Activated B cell treated with CpG ODN at 0.5 μM for 24 hours (primary cell): ENCODE measurements at regions of chr11 and their contacts with region 1.

Region 1: GRCh38 chr11:26087120-26087935 is 244.6 kb upstream of the ANO3 start:
- DNase-seq: no peak
- ATAC-seq: peak; percentile 95
- H3K4me3 Mint-ChIP-seq: peak overlapping the region; percentile 65
- H3K27ac Mint-ChIP-seq: peak overlapping the region; percentile 86
- H3K4me1 Mint-ChIP-seq: peaks cover 54% of the 10 kb centered on the region
- H3K27me3 Mint-ChIP-seq: no peaks in the 10 kb centered on the region
- CTCF ChIP-seq: no peak

Region 2: DNA sequence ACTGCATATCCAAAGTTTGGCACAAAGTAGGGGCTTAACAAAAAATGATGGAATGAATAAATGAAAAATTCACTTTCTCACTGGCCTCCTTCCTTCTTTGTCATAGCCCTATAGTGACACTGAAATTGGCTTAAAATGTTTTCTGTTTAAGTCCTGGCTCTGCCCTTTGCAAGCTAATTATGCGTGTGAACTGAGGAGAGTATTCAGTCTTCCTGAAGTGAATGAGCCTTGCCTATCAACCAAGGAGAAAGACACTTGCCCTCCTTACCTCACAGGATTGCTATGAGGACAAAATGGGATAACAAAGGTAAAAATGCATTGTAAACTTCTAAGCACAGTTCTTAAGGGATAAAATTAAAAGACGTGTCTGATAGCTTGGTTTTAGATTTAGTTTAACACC is 485.2 kb before region 1 on chr11:
- CTCF ChIA-PET with region 1: no interaction called
- POLR2A ChIA-PET with region 1: no interaction called
- intact Hi-C with region 1: no loop called
- DNase-seq: no peak
- ATAC-seq: no peak
- H3K4me3 Mint-ChIP-seq: no peak overlapping the region
- H3K27ac Mint-ChIP-seq: no peak overlapping the region
- H3K4me1 Mint-ChIP-seq: no peaks in the 10 kb centered on the region
- H3K27me3 Mint-ChIP-seq: no peaks in the 10 kb centered on the region
- CTCF ChIP-seq: no peak

Region 3: DNA sequence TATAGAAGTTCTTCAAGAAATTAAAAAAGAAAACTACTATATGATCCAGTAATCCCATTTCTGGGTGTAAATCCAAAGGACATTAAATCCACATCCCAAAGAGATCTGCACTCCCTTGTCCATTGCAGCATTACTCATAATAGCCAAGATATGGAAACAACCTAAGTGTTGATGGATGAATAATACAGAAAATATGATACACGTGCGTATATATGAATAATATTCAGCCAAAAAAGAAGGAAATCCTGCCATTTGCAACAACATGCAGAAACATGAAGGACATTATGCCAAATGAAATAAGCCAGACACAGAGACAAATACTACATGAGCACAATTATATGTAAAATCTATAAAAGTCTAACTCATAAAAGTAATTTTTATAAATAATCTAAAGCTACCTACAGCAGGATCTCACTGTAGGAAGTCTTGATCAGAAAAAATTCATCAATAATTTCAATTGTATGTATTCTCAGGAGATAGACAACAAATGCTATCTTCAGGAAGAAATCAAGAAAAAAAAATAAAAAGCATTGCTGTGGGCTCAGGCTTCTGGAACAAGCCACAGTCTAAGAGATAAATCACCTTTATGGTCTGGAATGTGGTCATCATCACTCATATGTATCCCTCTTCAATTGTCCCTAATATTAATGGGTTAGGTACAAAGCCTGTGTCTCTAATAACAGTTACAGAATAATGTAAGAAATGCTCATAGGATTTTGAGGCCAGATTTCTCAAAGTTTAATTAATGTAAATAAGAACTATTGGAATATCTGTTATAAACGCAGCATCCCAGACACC is 61.4 kb before region 1 on chr11:
- CTCF ChIA-PET with region 1: no interaction called
- POLR2A ChIA-PET with region 1: no interaction called
- intact Hi-C with region 1: no loop called
- DNase-seq: no peak
- ATAC-seq: no peak
- H3K4me3 Mint-ChIP-seq: no peak overlapping the region
- H3K27ac Mint-ChIP-seq: no peak overlapping the region
- H3K4me1 Mint-ChIP-seq: no peaks in the 10 kb centered on the region
- H3K27me3 Mint-ChIP-seq: no peaks in the 10 kb centered on the region
- CTCF ChIP-seq: no peak

Region 4: GRCh38 chr11:26043665-26044064 is 43.7 kb before region 1 on chr11:
- CTCF ChIA-PET with region 1: no interaction called
- POLR2A ChIA-PET with region 1: no interaction called
- intact Hi-C with region 1: loop called (anchors 1 kb)
- DNase-seq: no peak
- ATAC-seq: peak; percentile 65
- H3K4me3 Mint-ChIP-seq: no peak overlapping the region
- H3K27ac Mint-ChIP-seq: no peak overlapping the region
- H3K4me1 Mint-ChIP-seq: peaks cover 14% of the 10 kb centered on the region
- H3K27me3 Mint-ChIP-seq: no peaks in the 10 kb centered on the region
- CTCF ChIP-seq: no peak

Region 5: DNA sequence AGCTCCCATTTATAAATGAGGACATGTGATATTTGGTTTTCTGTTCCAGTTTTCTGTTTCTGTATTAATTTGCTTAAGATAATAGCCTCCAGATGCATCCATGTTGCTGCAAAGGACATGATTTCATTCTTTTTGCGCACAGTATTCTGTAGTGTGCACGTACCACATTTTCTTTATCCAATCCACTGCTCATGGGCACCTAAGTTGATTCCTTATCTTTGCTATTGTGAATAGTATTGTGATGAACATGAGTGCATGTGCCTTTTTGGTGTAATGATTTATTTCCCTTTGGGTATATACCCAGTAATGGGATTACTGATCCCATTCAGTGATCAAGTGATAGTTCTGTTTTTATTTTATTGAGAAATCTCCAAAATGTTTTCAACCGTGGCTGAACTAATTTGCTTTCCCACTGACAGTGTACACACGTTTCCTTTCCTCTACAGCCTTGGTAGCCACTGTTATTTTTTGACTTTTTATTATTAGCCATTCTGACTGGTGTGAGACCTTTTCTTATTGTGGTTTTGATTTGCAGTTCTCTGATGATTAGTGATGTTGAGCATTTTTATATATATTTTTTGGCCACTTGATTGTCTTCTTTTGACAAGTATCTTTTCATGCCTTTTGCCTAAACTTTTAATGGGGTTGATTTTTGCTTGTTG is 18.6 kb after region 1 on chr11:
- CTCF ChIA-PET with region 1: no interaction called
- POLR2A ChIA-PET with region 1: no interaction called
- intact Hi-C with region 1: loop called (anchors 2 kb)
- DNase-seq: no peak
- ATAC-seq: no peak
- H3K4me3 Mint-ChIP-seq: peak overlapping the region; percentile 8
- H3K27ac Mint-ChIP-seq: peak overlapping the region; percentile 43
- H3K4me1 Mint-ChIP-seq: peaks cover 16% of the 10 kb centered on the region
- H3K27me3 Mint-ChIP-seq: no peaks in the 10 kb centered on the region
- CTCF ChIP-seq: no peak

Region 6: DNA sequence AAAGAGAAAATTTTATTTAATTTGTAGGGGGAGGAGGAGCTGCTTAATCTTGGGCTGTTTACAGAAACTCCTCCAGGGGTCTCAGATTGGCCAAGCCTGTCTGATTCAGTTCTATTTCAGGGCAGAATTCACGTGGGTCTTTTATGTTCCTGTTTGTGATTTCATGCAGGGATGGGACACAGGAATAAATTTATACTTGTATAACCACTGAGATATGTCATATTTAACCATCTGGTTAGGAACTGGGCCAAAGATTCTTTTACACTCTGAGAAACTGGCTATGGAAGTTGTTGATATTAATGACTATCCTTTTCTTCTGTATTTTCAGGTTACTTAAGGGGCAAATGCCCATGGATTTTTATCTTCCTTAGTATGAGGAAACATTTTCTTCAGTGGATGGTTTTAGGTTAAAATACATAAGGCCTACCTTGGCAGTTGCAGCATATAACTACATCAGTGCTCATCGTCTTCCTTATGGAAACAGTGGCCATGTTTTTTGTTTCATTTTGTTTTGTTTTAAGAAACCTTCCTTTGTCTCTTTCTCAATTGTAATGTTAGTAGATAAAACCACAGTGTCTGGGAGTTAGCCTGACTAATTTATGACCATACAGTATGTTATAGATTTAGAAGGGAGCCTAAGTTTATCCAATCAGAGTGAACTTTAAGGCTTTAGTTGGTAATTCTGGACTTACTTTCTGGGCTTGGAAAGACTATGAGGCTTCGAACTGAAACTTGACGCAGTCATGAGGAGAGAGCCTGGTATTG is 112.2 kb after region 1 on chr11:
- CTCF ChIA-PET with region 1: no interaction called
- POLR2A ChIA-PET with region 1: no interaction called
- intact Hi-C with region 1: loop called (anchors 5 kb)
- DNase-seq: no peak
- ATAC-seq: no peak
- H3K4me3 Mint-ChIP-seq: no peak overlapping the region
- H3K27ac Mint-ChIP-seq: no peak overlapping the region
- H3K4me1 Mint-ChIP-seq: no peaks in the 10 kb centered on the region
- H3K27me3 Mint-ChIP-seq: no peaks in the 10 kb centered on the region
- CTCF ChIP-seq: no peak

Region 7: DNA sequence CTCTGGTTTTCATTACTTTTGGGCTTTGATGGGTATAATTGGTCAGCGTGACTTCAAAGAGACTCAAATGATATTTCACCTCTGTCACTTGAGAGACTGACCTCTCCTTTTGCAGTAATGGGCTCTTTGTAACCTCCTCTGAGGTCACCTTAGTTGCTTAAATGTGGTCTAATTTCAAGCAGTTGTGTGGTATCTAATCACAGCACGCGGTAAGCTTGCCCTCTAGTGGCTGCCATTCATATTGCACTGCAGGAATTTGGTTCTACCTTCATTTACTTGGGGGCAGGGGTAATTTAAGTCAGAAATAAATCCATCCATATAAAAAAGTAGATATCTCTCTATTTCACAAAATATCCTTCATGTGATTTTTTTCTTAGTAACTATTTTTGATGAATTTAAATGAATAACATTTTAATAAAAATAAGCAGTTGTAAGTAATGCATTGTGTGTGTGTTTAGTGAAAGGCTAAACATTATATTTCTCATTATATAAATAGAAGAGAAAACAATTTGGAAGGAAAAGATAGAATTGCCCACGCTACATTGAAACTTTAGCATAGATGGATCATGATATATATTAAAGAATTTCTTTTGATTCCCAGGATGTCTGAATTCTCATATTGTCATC is 189.6 kb after region 1 on chr11:
- CTCF ChIA-PET with region 1: no interaction called
- POLR2A ChIA-PET with region 1: no interaction called
- intact Hi-C with region 1: no loop called
- DNase-seq: no peak
- ATAC-seq: peak; percentile 79
- H3K4me3 Mint-ChIP-seq: no peak overlapping the region
- H3K27ac Mint-ChIP-seq: no peak overlapping the region
- H3K4me1 Mint-ChIP-seq: no peaks in the 10 kb centered on the region
- H3K27me3 Mint-ChIP-seq: peaks cover 2% of the 10 kb centered on the region
- CTCF ChIP-seq: peak; percentile 94